Left cardiac atrium (tissue), 4 donors: ENCODE measurements at regions of chr17 and their contacts with region 1.

Region 1: GRCh38 chr17:74379495-74380085 is 12.3 kb downstream of the GPR142 start:
- DNase-seq: peak; percentile 95
- ATAC-seq: peak; percentile 95 to 96

Region 2: GRCh38 chr17:74280093-74280513 is 99.5 kb before region 1 on chr17:
- intact Hi-C with region 1: no loop called
- DNase-seq: peak; percentile 66
- ATAC-seq: no peak

Region 3: DNA sequence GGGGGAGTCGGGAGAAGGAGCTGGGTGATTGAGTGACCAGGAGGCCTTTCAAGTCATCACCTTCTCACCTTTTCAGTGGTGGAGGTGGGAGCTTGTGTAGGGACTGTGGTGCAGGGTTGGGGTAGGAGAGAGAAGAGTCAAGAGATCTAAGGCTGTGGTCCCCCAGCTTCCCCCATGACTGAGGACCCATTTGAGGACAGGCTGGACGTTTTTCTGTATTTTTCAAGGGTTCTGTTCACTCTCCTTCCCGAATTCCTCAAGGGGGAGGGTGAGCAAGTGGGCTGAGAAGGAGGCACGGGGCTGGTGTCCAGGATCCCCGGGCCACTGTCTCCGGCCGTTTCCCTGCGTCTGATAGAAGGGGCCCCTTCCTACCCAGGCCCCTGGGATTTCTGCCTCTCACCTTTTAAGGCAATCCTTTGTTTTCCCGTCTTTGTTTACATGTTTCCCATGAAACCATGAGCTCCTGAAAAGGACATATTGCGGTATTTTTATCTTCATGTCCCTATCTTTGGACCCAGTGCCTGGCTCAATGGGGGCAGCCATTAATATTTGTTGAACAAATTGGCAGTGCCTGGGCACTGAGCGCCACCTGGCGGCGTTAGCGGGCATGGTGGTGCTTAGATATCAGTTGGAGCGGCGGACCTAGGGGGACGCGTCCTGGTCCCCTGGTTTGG is 77.7 kb after region 1 on chr17:
- intact Hi-C with region 1: loop called (anchors 1 kb)
- DNase-seq: peak; percentile 84
- ATAC-seq: peak in 1 of 2 donors; percentile 4

Region 4: DNA sequence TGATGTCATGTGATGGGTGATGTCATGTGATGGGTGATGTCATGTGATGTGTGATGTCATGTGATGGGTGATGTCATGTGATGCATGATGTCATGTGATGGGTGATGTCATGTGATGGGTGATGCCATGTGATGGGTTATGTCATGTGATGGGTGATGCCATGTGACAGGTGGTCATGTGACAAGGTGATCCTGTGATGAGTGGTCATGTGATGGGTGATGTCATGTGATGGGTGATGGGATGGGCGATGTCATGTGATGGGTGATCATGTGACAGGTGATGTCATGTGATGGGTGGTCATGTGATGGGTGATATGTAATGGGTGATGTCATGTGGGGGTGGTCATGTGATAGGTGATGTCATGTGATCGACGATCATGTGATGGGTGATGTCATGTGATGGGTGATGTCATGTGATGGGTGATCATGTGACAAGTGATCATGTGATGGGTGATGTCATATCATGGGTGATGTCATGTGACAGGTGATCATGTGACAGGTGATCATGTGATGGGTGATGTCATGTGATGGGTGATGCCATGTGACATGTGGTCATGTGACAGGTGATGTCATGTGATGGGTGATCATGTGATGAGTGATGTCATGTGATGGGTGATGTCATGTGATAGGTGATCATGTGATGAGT is 134.5 kb after region 1 on chr17:
- intact Hi-C with region 1: no loop called
- DNase-seq: no peak
- ATAC-seq: no peak